AG04450 (cell line): ENCODE measurements at regions of chr10 and their contacts with region 1.

Region 1: DNA sequence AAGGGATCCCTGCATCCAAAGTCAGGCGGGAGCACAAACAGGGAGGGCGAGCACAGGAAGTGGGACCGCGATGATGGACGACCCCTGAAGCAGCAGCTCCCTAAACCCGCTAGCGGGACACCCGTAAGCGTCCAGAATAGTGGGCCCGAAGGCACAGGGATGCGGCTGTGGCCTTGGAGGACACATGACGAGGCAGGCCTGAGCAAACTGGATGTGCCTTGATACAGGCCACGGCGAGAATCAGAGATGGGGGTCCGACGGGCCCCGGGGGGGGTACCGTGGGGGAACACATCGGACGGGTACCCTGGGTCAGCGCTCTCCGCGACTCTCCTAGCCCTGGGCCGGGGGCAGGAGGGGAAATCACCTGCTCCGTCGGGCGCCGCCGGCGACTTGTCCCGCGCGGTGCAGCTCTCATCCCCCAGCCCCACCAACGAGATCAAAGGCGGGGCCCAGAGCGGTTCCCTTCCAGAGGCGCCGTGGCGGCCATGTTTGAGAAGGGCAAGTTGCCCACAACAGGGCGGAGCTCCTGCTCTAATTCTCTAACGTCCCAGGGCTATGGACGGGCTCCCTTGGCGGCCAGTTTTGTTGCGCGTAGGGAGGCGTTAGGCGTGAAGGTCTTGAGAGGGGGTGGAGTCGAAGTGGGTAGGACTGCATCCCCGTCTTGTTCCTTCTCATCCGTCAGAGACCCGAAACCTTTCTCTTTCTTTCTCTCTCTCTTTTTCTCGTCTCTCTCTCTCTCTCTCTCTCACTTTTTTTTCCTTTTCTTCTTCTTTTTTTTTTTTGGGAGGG is at the start of gene CUEDC2:
- DNase-seq: peak; percentile 93
- H3K4me3 ChIP-seq: peak within 1 kb of the TSS; percentile 93
- H3K27ac ChIP-seq: peak within 1 kb of the TSS; percentile 73
- H3K27me3 ChIP-seq: no peaks in the 10 kb centered on the region
- CTCF ChIP-seq: no peak
- polyA plus RNA-seq, gene CUEDC2: 61.1 and 68.6 TPM in 2 replicates

Region 2: GRCh38 chr10:102410429-102411073 is 21.8 kb before region 1 on chr10:
- CTCF ChIA-PET with region 1: no interaction called
- POLR2A ChIA-PET with region 1: no interaction called
- DNase-seq: no peak
- H3K4me3 ChIP-seq: peak overlapping the region; percentile 59
- H3K27ac ChIP-seq: peak overlapping the region; percentile 47
- H3K27me3 ChIP-seq: peaks cover 45% of the 10 kb centered on the region
- CTCF ChIP-seq: no peak

Region 3: GRCh38 chr10:102450194-102450938 is 18.0 kb after region 1 on chr10:
- CTCF ChIA-PET with region 1: interaction called, 7 read pairs
- POLR2A ChIA-PET with region 1: interaction called, 22 read pairs
- DNase-seq: no peak
- H3K4me3 ChIP-seq: peak overlapping the region; percentile 70
- H3K27ac ChIP-seq: no peak overlapping the region
- H3K27me3 ChIP-seq: no peaks in the 10 kb centered on the region
- CTCF ChIP-seq: no peak

Region 4: DNA sequence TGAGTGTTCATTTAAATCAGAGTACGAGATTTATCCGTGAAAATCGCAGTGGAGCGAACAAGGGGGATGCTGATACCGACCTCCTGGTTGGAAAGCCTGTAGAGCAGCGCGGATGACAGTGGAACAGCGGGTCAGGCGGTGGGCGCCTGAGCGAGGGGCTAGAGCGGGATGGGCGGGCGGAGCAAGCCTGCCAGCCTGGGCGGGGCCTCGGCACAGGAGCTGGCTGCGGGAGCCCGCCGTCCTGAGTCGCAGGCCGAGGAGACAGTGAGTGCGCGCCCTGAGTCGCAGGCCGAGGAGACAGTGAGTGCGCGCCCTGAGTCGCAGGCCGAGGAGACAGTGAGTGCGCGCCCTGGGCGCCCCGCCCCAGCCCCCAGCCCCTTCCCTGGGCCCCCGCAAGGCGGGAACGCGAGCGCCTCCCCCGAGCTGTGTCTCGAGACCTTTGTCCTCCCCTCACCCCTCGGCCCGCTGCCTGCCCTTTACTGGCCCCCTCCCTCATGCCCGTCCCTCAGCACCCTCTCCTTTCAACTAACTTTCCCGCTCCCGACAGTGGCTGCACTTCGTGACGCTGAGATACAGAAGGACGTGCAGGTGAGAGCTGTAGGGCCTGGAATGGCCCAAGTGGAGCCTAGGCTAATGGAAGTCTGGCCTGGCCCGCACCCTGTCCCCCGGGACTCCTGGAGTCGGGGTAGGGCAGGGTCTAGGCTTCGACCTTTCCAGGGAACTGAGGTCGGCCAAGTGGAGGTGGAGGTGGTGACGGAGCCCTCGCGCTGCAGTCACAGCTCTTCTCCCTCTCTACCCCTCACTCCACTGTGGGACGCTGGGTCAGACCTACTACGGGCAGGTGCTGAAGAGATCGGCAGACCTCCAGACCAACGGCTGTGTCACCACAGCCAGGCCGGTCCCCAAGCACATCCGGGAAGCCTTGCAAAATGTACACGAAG is 437.2 kb after region 1 on chr10 and contains the start of gene AS3MT:
- CTCF ChIA-PET with region 1: no interaction called
- POLR2A ChIA-PET with region 1: no interaction called
- DNase-seq: no peak
- H3K4me3 ChIP-seq: peak within 1 kb of the TSS; percentile 59
- H3K27ac ChIP-seq: no peak within 1 kb of the TSS
- H3K27me3 ChIP-seq: no peaks in the 10 kb centered on the region
- CTCF ChIP-seq: no peak
- polyA plus RNA-seq, gene AS3MT: 4.0 and 6.7 TPM in 2 replicates